ENCODE measurements at regions of chr6 and their contacts with region 1.

Region 1: GRCh38 chr6:151765444-151765886 is 42.0 kb upstream of the ESR1 start:
- DNase-seq: peak; percentile 40
- H3K4me3 Mint-ChIP-seq: no peak overlapping the region
- H3K27ac Mint-ChIP-seq: no peak overlapping the region
- H3K4me1 Mint-ChIP-seq: peaks cover 34% of the 10 kb centered on the region
- H3K27me3 Mint-ChIP-seq: peaks cover 22% of the 10 kb centered on the region

Region 2: DNA sequence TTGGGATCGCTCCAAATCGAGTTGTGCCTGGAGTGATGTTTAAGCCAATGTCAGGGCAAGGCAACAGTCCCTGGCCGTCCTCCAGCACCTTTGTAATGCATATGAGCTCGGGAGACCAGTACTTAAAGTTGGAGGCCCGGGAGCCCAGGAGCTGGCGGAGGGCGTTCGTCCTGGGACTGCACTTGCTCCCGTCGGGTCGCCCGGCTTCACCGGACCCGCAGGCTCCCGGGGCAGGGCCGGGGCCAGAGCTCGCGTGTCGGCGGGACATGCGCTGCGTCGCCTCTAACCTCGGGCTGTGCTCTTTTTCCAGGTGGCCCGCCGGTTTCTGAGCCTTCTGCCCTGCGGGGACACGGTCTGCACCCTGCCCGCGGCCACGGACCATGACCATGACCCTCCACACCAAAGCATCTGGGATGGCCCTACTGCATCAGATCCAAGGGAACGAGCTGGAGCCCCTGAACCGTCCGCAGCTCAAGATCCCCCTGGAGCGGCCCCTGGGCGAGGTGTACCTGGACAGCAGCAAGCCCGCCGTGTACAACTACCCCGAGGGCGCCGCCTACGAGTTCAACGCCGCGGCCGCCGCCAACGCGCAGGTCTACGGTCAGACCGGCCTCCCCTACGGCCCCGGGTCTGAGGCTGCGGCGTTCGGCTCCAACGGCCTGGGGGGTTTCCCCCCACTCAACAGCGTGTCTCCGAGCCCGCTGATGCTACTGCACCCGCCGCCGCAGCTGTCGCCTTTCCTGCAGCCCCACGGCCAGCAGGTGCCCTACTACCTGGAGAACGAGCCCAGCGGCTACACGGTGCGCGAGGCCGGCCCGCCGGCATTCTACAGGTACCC is 42.3 kb after region 1 on chr6 and contains the start of gene ESR1:
- intact Hi-C with region 1: loop called (anchors 2 kb)
- DNase-seq: no peak
- H3K4me3 Mint-ChIP-seq: peak within 1 kb of the TSS; percentile 75
- H3K27ac Mint-ChIP-seq: no peak within 1 kb of the TSS
- H3K4me1 Mint-ChIP-seq: peaks cover 23% of the 10 kb centered on the region
- H3K27me3 Mint-ChIP-seq: peaks cover 66% of the 10 kb centered on the region
- total RNA-seq, gene ESR1: 0.34 and 0.78 TPM in 2 replicates

Region 3: DNA sequence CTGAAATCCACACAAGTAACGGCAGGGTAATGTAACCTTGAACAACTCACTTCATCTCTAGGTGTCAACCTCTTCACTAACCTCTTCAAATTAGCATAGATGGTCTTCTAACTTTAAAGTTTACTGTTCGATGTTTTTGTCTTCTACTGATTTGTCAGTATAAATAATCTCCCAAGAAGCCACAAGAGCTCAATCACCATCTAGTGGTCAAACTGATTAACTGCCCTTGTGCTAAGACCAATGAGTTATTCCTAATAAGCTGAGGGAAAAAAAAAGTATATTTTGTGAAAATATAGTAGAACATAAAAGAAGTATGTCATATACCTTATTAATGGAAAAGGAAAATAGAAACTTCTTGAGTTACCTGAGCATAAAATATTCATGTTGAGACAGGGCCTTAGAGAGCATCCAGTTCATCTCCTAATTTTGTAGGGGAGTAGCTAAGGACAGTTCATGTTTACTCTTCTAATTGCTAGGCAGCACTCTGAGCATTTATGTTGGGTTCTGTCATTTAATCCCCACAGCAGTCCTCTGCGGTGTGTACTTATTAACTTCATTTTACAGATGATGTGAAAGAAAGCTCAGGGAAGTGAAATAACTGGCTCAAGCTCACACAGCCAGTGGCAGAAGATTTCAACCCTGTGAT is 359.1 kb after region 1 on chr6:
- intact Hi-C with region 1: loop called (anchors 1 kb)
- DNase-seq: no peak
- H3K4me3 Mint-ChIP-seq: no peak overlapping the region
- H3K27ac Mint-ChIP-seq: no peak overlapping the region
- H3K4me1 Mint-ChIP-seq: no peaks in the 10 kb centered on the region
- H3K27me3 Mint-ChIP-seq: no peaks in the 10 kb centered on the region

Region 4: GRCh38 chr6:152338335-152339125 is 573.1 kb after region 1 on chr6:
- intact Hi-C with region 1: loop called (anchors 1 kb)
- DNase-seq: peak; percentile 13
- H3K4me3 Mint-ChIP-seq: no peak overlapping the region
- H3K27ac Mint-ChIP-seq: no peak overlapping the region
- H3K4me1 Mint-ChIP-seq: peaks cover 6% of the 10 kb centered on the region
- H3K27me3 Mint-ChIP-seq: peaks cover 18% of the 10 kb centered on the region

Measured in activated T-helper 1 cell treated with anti-CD3 and anti-CD28 coated beads, Interleukin-12 subunit alpha, Interleukin-12 subunit beta, Interleukin-2, Interleukin-4 antibody, amounts not matched to agents 30 ng/mL and 10 ng/mL and 1 ng/mL, durations not matched to agents 14 hours and 24 hours and 36 hours (primary cell).